HAP-1 (cell line): ENCODE measurements at regions of chr1 and their contacts with region 1.

Region 1: GRCh38 chr1:66503841-66504470 is 30.0 kb upstream of the SGIP1 start:
- DNase-seq: peak; percentile 37 to 73
- H3K4me3 ChIP-seq: no peak overlapping the region
- H3K4me1 ChIP-seq: peaks cover 3% of the 10 kb centered on the region; the same call in 1 of the 2 replicates
- H3K27me3 ChIP-seq: peaks cover 4% of the 10 kb centered on the region; the same call in 1 of the 2 replicates

Region 2: DNA sequence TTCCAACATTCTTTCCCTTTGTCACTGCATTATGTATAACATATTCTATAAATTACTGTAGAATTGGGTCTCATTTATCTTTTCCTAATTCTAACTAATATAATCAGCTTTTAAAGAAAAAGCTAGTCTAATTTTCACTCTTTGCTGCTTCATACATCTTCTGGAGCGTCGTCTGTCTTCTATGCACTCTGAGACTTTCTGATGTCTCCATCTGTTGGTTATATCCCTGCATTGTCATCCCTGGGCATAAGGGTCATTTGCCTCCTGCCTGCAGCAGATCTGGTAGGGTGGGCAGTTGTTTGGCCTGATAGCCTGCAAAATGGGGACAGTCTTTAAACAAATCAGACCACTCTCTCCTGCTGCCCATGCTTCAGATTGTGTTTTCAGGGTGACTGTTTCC is 207.5 kb after region 1 on chr1:
- in situ Hi-C with region 1: loop called (anchors 25 kb)
- DNase-seq: no peak
- H3K4me3 ChIP-seq: no peak overlapping the region
- H3K4me1 ChIP-seq: no peaks in the 10 kb centered on the region
- H3K27me3 ChIP-seq: no peaks in the 10 kb centered on the region

Region 3: GRCh38 chr1:66732407-66733166 is 228.6 kb after region 1 on chr1:
- in situ Hi-C with region 1: no loop called
- DNase-seq: no peak
- H3K4me3 ChIP-seq: no peak overlapping the region
- H3K4me1 ChIP-seq: peaks cover 5% of the 10 kb centered on the region
- H3K27me3 ChIP-seq: no peaks in the 10 kb centered on the region